ENCODE measurements at regions of chr20 and their contacts with region 1.

Region 1: GRCh38 chr20:21125849-21126580 is at the start of gene KIZ:
- DNase-seq: peak; percentile 91 to 98 (median 94)
- H3K4me3 ChIP-seq: peak within 1 kb of the TSS; percentile 59 to 99 (median 93)
- H3K27ac ChIP-seq: peak within 1 kb of the TSS in 58 of 59 donors; percentile 57 to 96 (median 90)
- H3K27me3 ChIP-seq: no peaks in the 10 kb centered on the region
- CTCF ChIP-seq: peak in 53 of 56 donors; percentile 13 to 67 (median 50)
- total RNA-seq, gene KIZ: 29.8 to 75.5 (median 45.9) TPM

Region 2: DNA sequence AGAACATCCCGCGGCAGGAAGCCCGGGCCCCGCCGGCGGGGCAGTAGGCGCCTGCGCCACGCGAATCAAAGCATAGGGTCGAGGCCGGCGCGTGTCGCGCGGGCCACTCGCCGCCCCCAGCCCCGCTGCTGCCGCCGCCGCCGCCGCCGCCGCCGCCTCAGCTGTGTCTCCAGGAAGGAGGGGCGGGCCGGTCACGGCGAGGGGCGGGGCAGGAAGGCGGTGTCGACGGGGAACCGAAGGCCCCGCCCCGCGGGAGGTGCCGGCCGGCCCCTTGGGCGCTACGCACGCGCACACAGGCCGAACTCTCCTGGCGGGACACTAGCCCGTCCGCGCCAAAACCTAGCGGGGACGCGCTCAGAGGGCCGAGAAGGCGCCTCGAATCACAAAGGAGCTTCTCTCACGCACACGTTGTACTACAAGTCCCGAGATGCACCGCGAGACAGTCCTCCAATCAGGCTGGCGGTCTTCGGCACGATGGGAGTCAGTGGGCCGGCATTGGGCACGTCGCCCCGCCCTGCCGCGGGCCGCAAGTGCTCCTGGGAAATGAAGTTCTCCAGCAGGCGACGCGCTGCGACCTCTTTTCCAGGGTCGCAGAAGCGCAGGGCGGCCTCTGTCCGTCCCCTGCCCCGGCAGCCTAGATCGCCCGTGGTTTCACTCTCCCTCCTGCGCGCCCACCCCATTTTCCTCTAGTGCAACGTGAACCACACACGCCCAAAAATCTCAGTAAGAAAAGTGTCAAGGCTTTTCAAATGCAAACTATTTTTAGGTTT is 413.4 kb before region 1 on chr20 and contains the start of gene RALGAPA2:
- intact Hi-C with region 1: loop called in 1 of 2 experiments (anchors 10 kb)
- DNase-seq: peak; percentile 96 to 99 (median 98)
- H3K4me3 ChIP-seq: peak within 1 kb of the TSS; percentile 65 to 99 (median 89)
- H3K27ac ChIP-seq: peak within 1 kb of the TSS; percentile 66 to 98 (median 95)
- H3K27me3 ChIP-seq: no peaks in the 10 kb centered on the region
- CTCF ChIP-seq: peak; percentile 18 to 74 (median 54)
- total RNA-seq, gene RALGAPA2: 20.3 to 60.5 (median 34.7) TPM

Region 3: GRCh38 chr20:20860078-20860806 is 265.8 kb before region 1 on chr20:
- intact Hi-C with region 1: loop called in 1 of 2 experiments (anchors 10 kb)
- DNase-seq: peak; percentile 76 to 97 (median 91)
- H3K4me3 ChIP-seq: peak overlapping the region in 1 of 59 donors; percentile 5
- H3K27ac ChIP-seq: peak overlapping the region in 1 of 59 donors; percentile 57
- H3K27me3 ChIP-seq: peaks cover 0 to 15% (median 0%) of the 10 kb centered on the region in 45 donors
- CTCF ChIP-seq: peak; percentile 84 to 100 (median 98)

Region 4: DNA sequence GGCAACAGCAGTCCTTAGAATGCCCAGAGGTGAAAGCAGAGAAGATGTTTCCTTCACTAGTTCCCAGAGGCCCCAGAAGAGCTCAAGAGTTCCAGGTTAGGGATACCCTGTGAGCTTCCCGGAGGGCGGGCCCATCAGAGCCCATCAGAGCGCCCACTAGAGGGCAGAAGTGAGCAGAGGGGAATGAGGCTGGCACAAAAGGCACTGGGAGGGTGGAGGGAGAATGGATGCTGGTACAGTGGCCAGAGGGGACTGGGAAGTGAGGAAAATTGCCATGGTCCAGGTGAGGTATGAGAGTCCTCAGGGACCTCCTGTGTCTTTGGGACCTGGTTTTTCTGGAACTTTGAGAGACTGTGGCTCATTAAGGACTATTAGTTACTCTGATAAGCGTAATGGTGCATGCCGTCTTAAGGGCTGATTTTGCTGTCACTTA is 77.2 kb before region 1 on chr20:
- intact Hi-C with region 1: loop called (anchors 5 kb)
- DNase-seq: peak in 1 of 10 donors; percentile 54
- H3K4me3 ChIP-seq: no peak overlapping the region
- H3K27ac ChIP-seq: no peak overlapping the region
- H3K27me3 ChIP-seq: peaks cover 0 to 26% (median 0%) of the 10 kb centered on the region in 45 donors
- CTCF ChIP-seq: peak in 55 of 56 donors; percentile 23 to 76 (median 56)

Region 5: DNA sequence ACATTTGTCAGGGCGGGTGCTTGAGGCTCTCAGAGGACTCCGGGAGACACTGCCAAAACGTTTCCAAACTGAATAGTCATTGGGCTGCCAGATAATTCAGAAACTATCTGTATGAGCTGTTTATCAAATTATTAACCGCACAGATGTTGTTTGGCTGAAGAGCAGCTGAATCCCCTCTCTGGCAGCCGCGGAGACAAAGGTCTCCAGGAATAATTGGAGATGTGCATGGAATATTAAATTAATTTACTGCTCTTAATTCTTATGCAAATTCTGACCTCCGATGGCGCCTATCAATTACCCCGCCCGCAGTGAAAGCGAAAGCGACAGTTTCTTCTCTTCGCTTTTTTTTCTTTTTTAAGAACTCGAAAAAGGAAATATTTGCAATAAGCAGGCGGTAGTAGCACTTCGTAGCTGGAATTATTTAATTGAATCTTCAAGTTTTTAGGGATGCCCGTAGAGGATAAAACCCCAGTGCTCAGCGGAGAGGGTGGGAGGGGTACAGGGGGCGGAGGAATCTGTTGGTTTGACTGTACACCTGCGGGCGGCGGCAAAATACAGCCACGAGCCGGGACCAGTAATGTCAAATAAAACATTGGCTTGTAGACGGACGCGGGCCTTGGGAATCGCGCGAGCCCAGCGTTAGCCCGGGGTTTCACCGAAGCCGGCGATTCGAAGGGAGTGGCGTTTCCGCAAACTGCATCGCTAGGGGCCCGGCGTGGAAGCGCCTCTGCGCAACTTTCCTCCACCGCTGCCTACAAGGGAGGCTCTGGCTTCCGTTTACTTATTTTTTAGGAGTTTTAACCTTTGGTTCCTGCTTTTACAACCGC is 26.1 kb before region 1 on chr20:
- intact Hi-C with region 1: loop called in 1 of 2 experiments (anchors 2 kb)
- DNase-seq: peak in 4 of 10 donors; percentile 18 to 53 (median 43)
- H3K4me3 ChIP-seq: peak overlapping the region; percentile 29 to 76 (median 57)
- H3K27ac ChIP-seq: peak overlapping the region in 52 of 59 donors; percentile 3 to 84 (median 60)
- H3K27me3 ChIP-seq: peaks cover 3 to 95% (median 72%) of the 10 kb centered on the region in 45 donors
- CTCF ChIP-seq: peak in 4 of 56 donors; percentile 6 to 27 (median 13)

Region 6: DNA sequence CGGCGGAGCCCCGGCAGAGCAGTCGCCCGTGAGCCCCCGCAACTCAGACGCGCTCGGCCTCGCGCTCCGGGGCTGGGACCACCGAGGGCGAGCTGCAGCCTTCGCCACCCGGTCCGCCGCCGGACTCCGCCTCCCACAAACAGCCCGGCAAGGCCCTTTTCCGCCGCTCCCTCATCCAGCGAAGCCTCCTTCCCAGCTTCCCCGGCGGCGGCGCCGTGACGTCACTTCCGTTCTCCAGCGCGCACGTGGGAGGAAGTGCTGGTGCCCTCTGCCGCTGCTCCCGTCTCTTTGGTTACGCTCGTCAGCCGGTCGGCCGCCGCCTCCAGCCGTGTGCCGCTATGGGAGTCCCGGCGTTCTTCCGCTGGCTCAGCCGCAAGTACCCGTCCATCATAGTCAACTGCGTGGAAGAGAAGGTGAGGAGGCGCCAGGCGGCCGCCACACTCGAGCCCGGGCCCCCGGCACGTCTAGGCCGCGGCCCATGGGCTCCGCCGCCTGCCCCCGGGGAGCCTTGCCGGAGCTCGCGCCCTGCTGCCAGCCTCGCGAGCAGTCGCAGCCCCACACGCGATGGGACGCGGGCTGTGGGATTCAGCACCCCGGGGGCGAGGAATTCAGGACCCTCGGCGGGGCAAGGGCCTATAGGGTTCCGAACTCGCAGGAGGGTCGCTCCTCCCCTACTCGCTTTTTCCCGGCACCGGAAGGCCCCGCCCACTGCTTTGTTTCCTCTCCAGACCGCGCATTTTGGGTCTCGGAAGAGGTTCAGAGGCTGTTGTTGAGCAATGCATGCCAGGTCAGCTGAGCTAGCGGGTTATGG is 177.3 kb after region 1 on chr20 and contains the start of gene XRN2:
- intact Hi-C with region 1: loop called (anchors 5 kb)
- DNase-seq: peak; percentile 86 to 98 (median 94)
- H3K4me3 ChIP-seq: peak within 1 kb of the TSS; percentile 72 to 100 (median 97)
- H3K27ac ChIP-seq: peak within 1 kb of the TSS; percentile 75 to 98 (median 94)
- H3K27me3 ChIP-seq: no peaks in the 10 kb centered on the region
- CTCF ChIP-seq: peak in 51 of 56 donors; percentile 14 to 73 (median 52)
- total RNA-seq, gene XRN2: 22.9 to 32.8 (median 27.2) TPM

Region 7: GRCh38 chr20:21615617-21616080 is 489.6 kb after region 1 on chr20:
- intact Hi-C with region 1: loop called in 1 of 2 experiments (anchors 10 kb)
- DNase-seq: peak; percentile 57 to 92 (median 86)
- H3K4me3 ChIP-seq: peak overlapping the region in 3 of 59 donors; percentile 3 to 22 (median 12)
- H3K27ac ChIP-seq: peak overlapping the region; percentile 38 to 98 (median 89)
- H3K27me3 ChIP-seq: peaks cover 0 to 12% (median 0%) of the 10 kb centered on the region in 45 donors
- CTCF ChIP-seq: peak; percentile 60 to 95 (median 86)